Lower lobe of right lung (tissue), 2 donors: ENCODE measurements at regions of chr6 and their contacts with region 1.

Region 1: DNA sequence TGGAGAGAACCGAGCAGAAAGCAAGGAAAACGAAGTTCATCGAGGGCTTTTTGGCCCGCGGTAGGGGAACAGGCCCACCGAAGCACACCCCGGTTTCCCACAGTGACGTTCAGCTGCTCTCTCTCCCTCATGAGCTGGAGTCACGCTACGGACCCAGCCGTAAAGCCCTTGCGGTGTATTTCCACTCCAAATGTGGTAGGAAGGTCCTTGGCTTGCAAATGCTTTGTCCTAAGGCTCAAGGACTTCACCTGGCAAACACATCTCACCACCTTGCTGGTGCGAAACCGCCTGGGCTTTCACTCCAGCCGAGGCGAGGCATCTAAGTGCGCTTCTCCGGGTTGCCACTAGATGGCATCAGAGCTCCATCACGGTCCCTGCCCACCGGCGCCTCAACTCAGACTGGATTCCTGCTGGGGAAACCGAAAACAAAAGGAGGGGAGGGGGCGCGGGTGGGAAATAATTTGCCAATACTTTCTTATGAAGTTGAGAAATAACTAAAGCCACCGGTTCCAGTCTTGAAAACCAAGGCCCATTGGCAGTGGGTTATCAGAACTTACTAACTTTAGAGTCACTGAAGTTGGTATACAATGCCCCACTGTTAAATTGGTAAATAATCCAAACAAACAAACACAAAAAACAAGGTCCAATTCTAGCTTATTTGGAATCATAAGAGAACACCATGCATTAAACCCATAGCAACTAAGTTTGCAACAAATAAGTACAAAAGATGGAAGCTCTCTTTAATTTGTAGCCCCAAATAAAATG is 13.4 kb upstream of the FOXC1 start:
- DNase-seq: peak; percentile 73
- ATAC-seq: peak; percentile 90 to 91
- H3K4me3 ChIP-seq: no peak overlapping the region
- H3K27ac ChIP-seq: no peak overlapping the region
- H3K4me1 ChIP-seq: peaks cover 3% of the 10 kb centered on the region
- H3K27me3 ChIP-seq: peaks cover 62% of the 10 kb centered on the region
- CTCF ChIP-seq: peak; percentile 95

Region 2: DNA sequence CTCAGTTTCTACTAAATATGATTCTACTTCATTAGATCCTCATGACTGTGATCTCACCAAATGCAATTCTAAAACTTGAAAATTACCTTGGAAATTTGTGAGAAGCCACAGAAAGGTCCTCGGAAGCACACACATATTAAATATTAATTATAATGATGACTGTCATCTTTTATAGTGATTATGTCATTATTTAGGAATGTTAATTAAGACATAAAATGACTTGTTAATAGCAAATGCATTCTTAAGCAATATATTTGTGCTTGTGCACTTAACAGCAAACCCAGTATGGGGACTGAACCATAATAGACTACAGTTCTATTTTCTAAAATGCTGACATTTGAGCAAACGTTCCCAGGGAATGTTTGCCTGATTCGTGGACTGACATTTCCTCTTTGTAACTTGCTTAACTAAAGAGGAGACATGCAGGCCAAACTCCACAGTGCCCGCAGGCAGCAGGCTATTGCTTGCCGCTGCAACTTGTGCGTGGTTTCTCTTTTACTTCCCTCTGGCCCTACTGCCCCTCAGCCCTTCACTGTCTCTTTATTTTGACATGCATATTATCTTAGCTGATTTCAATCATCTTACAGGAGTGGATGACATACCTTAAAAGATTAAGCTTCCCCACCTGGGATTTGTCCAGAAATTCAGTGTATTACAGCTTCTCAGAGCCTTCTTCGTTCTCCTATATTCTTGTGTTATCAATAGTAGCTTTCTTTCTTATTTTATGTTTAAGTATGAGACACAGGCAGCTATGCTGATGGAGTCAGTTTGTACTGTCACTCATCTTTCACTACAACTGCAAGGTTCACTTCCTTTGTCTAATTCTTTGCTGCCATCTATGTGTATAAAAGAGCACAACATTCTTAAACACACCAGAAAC is 507.6 kb after region 1 on chr6:
- intact Hi-C with region 1: loop called (anchors 10 kb)
- DNase-seq: no peak
- ATAC-seq: peak; percentile 47 to 50
- H3K4me3 ChIP-seq: no peak overlapping the region
- H3K27ac ChIP-seq: no peak overlapping the region
- H3K4me1 ChIP-seq: peaks cover 13% of the 10 kb centered on the region
- H3K27me3 ChIP-seq: no peaks in the 10 kb centered on the region
- CTCF ChIP-seq: peak; percentile 48